ENCODE measurements at regions of chr4 and their contacts with region 1.

Region 1: DNA sequence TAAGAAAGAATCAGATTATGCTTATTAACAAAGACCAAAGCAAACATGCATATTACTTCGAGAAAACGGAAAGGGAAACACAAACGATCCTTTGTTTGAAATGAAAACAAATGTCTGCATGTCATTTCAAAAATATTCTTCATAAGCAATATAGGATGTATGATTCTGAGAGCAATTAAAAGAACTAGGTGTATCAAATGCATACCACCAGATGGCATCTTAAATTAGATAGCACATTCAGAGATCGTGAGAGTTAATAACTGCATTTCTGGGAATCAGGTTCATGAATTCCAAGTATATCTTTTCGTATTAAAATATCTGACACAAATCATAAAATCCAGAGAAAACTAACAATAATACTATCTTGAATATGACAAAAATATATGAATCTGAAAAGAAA is 159.5 kb downstream of the PPP3CA start:
- DNase-seq: peak; percentile 56
- ATAC-seq: peak; percentile 56
- H3K4me3 ChIP-seq: no peak overlapping the region
- H3K27ac ChIP-seq: peak overlapping the region; percentile 23
- H3K4me1 ChIP-seq: peaks cover 22% of the 10 kb centered on the region
- H3K27me3 ChIP-seq: no peaks in the 10 kb centered on the region
- CTCF ChIP-seq: peak; percentile 63

Region 2: DNA sequence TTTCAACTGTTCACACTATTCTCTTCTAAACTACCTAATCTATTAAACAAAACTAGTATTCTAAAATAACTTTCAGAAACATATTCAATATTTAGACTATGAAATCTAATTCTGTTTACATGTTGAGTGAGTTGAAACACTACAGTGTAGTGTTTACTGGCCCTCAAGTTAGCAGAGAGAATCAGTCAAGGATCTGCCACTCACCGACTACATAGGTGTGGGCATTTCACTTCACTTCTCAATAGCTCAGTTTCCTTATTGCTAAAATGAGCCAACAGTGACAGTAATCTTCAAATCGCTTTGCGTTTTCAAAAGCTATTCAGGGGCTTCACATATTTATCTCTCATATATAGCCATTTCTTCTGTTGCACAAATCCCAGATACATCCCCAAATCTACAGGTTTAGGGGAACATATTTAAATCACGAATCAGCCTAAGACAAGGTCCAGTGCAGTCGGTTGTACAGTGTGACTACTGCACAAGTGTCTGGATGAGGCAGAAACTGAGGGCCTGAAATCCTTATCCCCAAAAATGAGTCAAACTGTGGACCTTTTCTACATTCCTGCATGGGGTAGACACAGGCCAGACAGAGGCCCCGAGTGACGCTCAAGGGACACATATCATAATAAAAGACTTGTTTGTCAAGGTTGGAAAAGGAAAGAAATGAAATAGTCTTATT is 29.7 kb after region 1 on chr4:
- CTCF ChIA-PET with region 1: no interaction called
- POLR2A ChIA-PET with region 1: no interaction called
- intact Hi-C with region 1: loop called (anchors 1 kb)
- DNase-seq: peak; percentile 12
- ATAC-seq: no peak
- H3K4me3 ChIP-seq: no peak overlapping the region
- H3K27ac ChIP-seq: no peak overlapping the region
- H3K4me1 ChIP-seq: no peaks in the 10 kb centered on the region; the same call in 1 of the 2 replicates
- H3K27me3 ChIP-seq: no peaks in the 10 kb centered on the region
- CTCF ChIP-seq: no peak